B cell (primary cell): ENCODE measurements at regions of chr2 and their contacts with region 1.

Region 1: DNA sequence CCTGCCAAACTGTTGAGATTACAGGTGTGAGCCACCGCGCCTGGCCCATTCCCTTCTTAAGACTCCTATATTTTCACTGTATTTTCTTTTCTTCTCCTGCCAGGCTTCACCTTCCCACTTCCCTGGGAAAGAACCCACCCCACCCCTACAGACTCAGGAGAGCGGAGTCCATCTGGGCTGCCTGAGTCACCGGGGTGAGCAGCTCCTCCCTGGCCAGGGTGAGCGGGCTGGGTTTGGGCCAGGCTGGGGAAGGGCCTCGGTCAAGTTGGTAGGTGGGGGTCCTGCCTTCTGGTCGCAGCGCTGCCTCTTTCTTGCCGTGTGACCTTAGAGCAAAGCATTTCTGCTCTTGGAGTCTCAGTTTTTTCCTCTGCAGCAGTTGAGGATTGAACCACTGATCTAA is 2.1 kb upstream of the GAREM2 start:
- DNase-seq: no peak
- ATAC-seq: no peak
- H3K4me3 ChIP-seq: no peak overlapping the region
- H3K4me3 Mint-ChIP-seq: peak overlapping the region; percentile 49
- H3K27ac ChIP-seq: no peak overlapping the region
- H3K27ac Mint-ChIP-seq: no peak overlapping the region
- H3K4me1 ChIP-seq: peaks cover 14 to 20% of the 10 kb centered on the region in 2 donors
- H3K4me1 Mint-ChIP-seq: peaks cover 14% of the 10 kb centered on the region
- H3K27me3 ChIP-seq: peaks cover 0 to 44% (median 20%) of the 10 kb centered on the region in 4 experiments
- H3K27me3 Mint-ChIP-seq: peaks cover 34% of the 10 kb centered on the region
- CTCF ChIP-seq: no peak

Region 2: GRCh38 chr2:26330113-26330549 is 159.3 kb after region 1 on chr2:
- CTCF ChIA-PET with region 1: no interaction called
- POLR2A ChIA-PET with region 1: no interaction called
- intact Hi-C with region 1: loop called (anchors 1 kb)
- DNase-seq: peak; percentile 79
- ATAC-seq: peak; percentile 95
- H3K4me3 ChIP-seq: no peak overlapping the region
- H3K4me3 Mint-ChIP-seq: no peak overlapping the region
- H3K27ac ChIP-seq: no peak overlapping the region
- H3K27ac Mint-ChIP-seq: no peak overlapping the region
- H3K4me1 ChIP-seq: peaks cover 2 to 5% of the 10 kb centered on the region in 2 donors
- H3K4me1 Mint-ChIP-seq: peaks cover 6% of the 10 kb centered on the region
- H3K27me3 ChIP-seq: no peaks in the 10 kb centered on the region
- H3K27me3 Mint-ChIP-seq: no peaks in the 10 kb centered on the region
- CTCF ChIP-seq: peak; percentile 97